ENCODE measurements at regions of chr2 and their contacts with region 1.

Region 1: DNA sequence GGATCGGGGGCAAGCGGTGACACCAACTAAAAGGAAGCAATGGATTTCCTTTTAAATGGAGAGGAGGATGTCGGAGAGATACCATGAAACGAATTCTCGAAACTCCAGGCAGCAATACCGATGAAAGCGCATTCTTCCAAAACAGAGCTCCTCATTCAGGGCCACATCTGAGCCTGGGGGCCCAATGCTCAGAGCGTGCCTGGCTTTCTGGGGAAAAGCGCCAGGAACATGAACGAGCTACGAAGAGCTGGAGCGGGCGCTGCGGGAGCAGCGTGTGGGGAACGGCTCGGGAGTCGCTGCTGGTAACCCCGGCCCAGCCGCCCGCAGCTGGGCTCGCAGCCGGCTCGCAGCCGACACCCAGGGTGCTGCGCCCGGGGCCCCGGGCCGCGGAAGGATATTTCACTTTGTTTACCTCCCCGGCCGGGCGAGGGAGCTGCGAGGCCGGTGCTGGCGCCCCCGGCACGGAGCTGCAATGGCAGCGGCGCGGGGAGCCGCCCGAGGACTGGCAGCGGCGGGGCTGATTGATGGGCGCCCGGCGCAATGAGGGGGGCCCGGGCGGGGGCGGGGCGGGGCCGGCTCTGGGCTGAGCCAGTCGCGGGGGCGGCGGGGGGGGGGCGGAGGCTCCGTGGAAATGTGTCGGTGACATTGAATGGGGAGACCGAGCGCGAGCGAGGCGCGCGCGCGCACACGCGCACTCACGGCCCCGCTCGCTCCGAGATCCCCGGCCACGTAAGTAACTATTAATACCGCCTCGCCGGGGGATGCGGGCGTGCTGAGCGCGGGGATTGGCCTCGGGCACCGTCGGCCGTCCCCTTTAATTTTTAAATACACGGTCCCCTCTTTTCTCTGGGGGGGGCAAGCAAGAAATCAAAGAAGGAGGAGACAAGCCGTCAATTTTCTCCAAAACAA is at the start of gene TRIB2:
- DNase-seq: peak; percentile 87
- H3K4me3 ChIP-seq: peak within 1 kb of the TSS; percentile 56 to 71
- H3K27ac ChIP-seq: peak within 1 kb of the TSS; percentile 86 to 88
- H3K4me1 ChIP-seq: no peaks in the 10 kb centered on the region
- H3K27me3 ChIP-seq: no peaks in the 10 kb centered on the region
- CTCF ChIP-seq: peak in 1 of 4 experiments; percentile 33
- POLR2A ChIP-seq: peak; percentile 25
- total RNA-seq, gene TRIB2: 72.3 to 205 TPM

Region 2: DNA sequence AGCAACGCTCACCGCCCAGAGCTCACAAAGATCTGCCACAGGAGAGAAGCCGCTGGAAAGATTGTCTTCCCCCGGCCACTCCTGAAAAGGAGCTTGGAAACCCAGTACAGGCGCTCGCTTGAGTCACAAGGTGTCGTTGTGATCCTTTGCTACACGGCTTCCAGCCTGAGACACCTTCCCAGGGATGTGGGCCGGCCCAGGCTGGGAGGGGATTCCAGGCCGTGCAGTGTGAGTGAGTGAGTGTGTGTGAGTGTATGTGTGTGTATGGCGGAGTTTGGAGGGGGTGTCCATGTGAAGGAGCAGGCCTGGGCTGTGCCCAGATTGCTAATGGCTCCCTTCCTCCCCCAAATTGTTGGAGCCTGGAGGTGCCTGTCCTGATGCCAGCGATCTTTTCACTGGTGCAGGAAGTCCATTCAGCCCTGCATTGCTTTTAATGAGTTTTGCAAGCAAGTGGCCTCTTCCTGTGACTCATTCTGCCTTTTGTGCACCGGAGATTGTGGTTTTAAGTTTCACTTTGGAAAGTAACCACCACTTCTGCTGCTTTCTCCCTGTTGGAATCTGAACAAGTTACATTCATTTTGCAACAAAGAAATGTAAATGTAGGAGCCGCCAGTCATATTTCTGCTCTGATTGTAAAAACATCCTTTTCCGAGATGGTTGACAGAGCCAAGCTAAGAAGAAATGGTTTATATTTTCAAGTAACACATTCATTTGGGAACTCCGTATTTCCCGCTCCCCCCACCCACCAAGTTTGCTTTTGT is 886.4 kb before region 1 on chr2:
- intact Hi-C with region 1: loop called (anchors 2 kb)
- DNase-seq: peak; percentile 79
- H3K4me3 ChIP-seq: peak overlapping the region; percentile 5 to 17
- H3K27ac ChIP-seq: peak overlapping the region; percentile 54 to 67
- H3K4me1 ChIP-seq: peaks cover 6% of the 10 kb centered on the region
- H3K27me3 ChIP-seq: no peaks in the 10 kb centered on the region
- CTCF ChIP-seq: peak in 2 of 4 experiments; percentile 45 to 49
- POLR2A ChIP-seq: no peak

Region 3: DNA sequence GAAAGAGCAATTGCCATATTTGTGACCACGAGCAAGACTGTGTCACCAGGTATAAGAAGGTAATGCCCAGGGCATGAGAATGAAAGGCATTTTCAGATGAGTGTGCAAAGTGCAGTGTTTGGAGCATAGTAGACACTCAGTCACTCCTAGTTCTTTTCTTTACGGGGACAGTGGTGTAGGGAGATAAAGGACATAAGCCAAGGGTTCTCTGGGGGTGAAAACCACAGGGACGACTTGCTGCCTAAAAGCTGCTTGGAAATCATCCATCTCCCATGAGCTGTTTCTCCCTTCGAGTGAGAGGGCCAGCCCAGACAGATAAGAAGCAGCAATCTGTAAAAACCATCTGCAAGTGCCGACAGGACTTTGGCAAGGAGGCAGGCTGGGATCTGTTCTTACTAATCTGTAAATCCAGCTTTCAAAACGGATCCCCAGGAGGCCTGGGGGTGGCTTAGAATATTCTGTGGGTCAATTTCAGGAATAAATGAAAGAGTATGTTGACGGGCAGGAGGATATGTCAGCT is 748.5 kb before region 1 on chr2:
- intact Hi-C with region 1: loop called (anchors 10 kb)
- DNase-seq: peak; percentile 78
- H3K4me3 ChIP-seq: no peak overlapping the region
- H3K27ac ChIP-seq: no peak overlapping the region
- H3K4me1 ChIP-seq: no peaks in the 10 kb centered on the region
- H3K27me3 ChIP-seq: no peaks in the 10 kb centered on the region
- CTCF ChIP-seq: no peak
- POLR2A ChIP-seq: no peak

Region 4: GRCh38 chr2:12456293-12457151 is 260.0 kb before region 1 on chr2:
- intact Hi-C with region 1: loop called (anchors 2 kb)
- DNase-seq: peak; percentile 88
- H3K4me3 ChIP-seq: no peak overlapping the region
- H3K27ac ChIP-seq: peak overlapping the region; percentile 51 to 56
- H3K4me1 ChIP-seq: no peaks in the 10 kb centered on the region
- H3K27me3 ChIP-seq: no peaks in the 10 kb centered on the region
- CTCF ChIP-seq: no peak
- POLR2A ChIP-seq: no peak

Region 5: DNA sequence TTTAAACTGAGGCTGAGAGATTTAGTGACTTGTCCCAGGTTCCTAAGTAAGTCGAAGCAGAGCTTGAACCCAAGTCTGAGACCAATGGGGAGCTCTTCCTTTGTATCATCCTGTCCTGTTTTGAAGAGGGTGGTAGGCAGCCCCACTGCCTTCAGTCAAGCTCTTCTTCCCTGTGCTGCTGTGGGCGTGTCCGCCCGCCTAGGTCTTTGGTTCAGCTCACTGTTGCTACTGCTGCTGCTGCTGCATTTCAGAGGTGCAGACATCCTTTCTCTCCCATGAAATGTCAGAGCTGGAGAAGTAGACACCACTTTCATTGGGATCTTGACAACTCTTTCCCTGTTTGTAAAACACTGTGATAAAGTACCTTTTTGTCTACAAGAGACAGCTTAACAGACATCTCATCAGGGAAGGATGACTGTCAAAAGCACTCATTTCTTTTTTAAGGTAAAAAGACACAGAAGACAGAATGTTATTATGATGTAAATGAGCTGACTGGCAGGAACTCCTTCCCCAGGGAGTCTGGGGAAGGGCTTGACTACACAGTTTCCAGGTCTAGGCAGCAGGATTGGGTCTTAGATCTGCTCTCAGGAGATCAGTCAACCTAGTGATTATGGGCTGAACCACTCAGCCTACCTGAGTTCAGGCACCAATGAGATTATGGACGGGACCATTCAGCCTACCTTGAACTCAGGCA is 91.5 kb before region 1 on chr2:
- intact Hi-C with region 1: no loop called
- DNase-seq: no peak
- H3K4me3 ChIP-seq: no peak overlapping the region
- H3K27ac ChIP-seq: no peak overlapping the region
- H3K4me1 ChIP-seq: no peaks in the 10 kb centered on the region
- H3K27me3 ChIP-seq: no peaks in the 10 kb centered on the region
- CTCF ChIP-seq: no peak
- POLR2A ChIP-seq: no peak

Region 6: DNA sequence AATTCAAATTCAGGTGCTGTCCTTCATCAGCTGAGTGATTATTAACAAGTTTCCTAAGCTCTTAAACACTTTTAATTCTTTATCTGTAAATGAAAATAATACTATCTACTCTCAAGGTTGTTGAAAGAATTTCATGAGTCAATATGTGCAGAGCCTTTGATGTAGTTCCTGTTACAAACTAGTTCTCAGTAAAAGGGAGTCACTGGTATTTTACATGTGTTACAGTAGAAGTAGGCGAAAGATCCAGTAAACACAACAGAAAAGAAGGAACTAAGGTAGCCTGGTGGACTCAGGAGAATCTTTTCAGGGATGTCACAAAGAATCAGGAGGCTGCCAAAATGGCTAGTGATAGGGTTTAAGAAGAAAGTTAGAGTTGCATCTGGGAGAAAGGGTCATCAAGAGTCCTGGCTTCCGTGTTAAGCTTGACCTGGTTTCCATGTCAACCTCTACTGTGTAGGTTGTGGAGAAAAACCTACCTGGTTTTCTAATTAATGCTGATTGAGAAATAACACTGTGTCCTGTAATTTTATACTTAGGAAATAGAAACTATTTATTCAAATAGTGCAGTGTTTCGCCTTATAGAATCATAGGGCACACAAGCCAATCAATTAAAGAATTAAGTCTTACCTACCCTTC is 58.1 kb before region 1 on chr2:
- intact Hi-C with region 1: no loop called
- DNase-seq: no peak
- H3K4me3 ChIP-seq: no peak overlapping the region
- H3K27ac ChIP-seq: no peak overlapping the region
- H3K4me1 ChIP-seq: no peaks in the 10 kb centered on the region
- H3K27me3 ChIP-seq: no peaks in the 10 kb centered on the region
- CTCF ChIP-seq: no peak
- POLR2A ChIP-seq: no peak

Region 7: DNA sequence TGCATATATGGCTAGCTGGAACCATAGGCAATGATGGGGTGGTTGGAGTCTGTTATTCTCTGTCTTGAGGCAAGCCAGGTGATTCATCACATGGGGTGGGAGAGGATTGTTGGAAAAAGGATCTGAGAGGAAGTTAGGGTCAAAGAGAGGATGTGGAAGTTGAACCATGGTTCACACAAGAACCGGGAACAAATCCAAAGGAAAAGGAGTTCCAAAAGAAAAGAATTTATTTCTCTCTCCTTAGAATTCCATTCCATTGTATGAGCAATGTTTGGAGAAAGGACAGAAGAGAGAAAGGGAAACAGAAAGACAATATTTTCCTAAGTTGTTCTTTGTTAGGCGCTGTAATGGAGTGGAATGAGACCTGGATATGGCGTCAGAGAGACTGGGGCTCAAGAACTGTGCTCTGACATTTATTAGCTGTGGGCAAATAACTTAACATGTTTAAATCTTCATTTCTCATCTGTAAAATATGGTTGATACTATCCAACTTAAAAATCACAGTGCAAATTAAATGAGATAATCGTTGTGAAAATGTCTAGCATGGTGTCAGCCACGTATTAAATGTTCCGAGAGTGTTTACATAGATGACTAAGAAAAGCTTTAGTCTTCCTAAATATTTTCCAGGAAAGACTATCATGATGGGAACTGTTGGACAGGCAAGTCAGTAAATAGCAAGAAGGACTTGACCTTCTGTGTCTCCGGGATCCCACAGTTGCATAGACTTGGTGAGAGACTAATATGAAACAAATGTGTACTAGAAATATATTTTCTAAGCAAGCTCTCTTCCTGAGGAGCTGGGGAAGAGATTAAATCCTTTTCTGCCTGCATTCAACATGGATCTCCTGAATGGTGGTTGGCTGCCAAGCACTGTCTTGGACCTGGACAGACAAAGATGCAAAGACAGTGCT is 71.6 kb after region 1 on chr2:
- intact Hi-C with region 1: loop called (anchors 5 kb)
- DNase-seq: no peak
- H3K4me3 ChIP-seq: no peak overlapping the region
- H3K27ac ChIP-seq: peak overlapping the region; percentile 28 to 41
- H3K4me1 ChIP-seq: no peaks in the 10 kb centered on the region
- H3K27me3 ChIP-seq: no peaks in the 10 kb centered on the region
- CTCF ChIP-seq: no peak
- POLR2A ChIP-seq: no peak

Region 8: GRCh38 chr2:13006829-13007717 is 290.5 kb after region 1 on chr2:
- intact Hi-C with region 1: loop called (anchors 5 kb)
- DNase-seq: peak; percentile 58
- H3K4me3 ChIP-seq: no peak overlapping the region
- H3K27ac ChIP-seq: no peak overlapping the region
- H3K4me1 ChIP-seq: no peaks in the 10 kb centered on the region
- H3K27me3 ChIP-seq: no peaks in the 10 kb centered on the region
- CTCF ChIP-seq: peak; percentile 56 to 84 (median 78)
- POLR2A ChIP-seq: no peak

Measured in prostate gland (tissue), 2 donors.